ENCODE measurements at regions of chr18 and their contacts with region 1.

Region 1: DNA sequence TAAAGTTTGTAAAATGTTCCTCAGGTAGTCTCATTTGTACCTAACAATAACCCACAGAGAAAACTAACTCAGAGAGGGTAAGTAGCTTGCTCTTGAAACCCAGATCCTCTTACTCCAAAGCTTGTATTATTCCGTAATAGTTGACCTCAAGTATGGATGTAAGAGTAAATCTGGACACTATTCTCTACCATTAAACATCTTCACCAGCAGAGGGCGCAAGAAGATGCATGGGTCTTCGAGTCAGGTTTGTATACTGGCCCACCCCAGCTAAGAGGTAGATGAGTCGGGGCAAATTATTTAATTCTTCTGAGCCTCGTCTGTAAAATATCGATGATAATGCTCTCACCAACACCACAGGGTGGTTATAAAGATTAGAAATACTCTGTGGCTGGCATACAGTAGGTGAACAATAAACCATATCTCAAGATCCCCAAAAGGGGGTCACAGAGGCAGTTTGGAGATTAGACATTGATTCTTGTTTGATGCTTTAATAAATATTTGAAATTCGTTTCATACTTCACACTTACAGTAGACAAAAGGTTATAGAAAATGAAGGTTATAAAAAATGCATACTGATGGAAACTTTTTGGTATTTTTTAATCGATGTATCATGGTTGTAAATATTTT is 3.5 kb upstream of the CABLES1 start:
- DNase-seq: no peak

Region 2: GRCh38 chr18:23213200-23213599 is 81.4 kb after region 1 on chr18:
- intact Hi-C with region 1: loop called (anchors 5 kb)
- DNase-seq: no peak

Region 3: GRCh38 chr18:23228102-23229061 is 96.6 kb after region 1 on chr18:
- intact Hi-C with region 1: loop called (anchors 2 kb)
- DNase-seq: no peak

Region 4: GRCh38 chr18:23276451-23276850 is 144.6 kb after region 1 on chr18:
- intact Hi-C with region 1: loop called (anchors 5 kb)
- DNase-seq: no peak

Region 5: DNA sequence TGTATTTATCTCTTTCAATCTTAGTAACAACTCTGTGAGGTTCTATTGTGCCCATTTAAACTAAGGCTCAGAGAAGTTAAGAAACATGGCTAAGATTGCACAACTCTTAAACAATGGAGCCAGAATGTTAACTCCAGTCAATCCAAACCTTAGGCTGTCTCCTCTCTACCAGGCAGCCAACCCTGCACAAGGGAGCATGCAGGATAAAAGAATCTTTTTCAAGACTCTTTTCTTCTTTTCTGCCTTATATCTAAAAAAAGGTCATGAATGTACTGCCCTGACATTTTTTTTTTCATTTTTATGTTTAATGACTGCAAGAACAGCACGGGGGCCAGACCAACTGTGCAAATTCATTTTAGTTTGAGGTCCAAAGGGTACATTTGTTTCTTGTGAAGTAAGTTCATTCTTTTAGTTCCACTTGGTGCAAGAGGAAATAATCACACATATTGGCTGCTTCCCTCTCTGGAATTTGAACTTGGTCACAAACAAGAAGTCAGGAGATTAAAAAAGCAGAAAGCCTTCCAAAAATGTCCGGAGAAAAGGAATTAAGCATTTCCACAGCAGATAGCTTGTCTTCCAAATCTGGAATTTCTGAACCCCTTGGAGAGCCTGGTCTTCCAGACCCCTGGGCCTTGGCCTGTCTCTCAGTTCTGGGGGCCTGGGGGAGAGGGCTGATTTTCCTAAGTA is 225.3 kb after region 1 on chr18:
- intact Hi-C with region 1: loop called (anchors 2 kb)
- DNase-seq: no peak

Region 6: GRCh38 chr18:23377669-23378301 is 246.0 kb after region 1 on chr18:
- intact Hi-C with region 1: loop called (anchors 5 kb)
- DNase-seq: no peak

Region 7: DNA sequence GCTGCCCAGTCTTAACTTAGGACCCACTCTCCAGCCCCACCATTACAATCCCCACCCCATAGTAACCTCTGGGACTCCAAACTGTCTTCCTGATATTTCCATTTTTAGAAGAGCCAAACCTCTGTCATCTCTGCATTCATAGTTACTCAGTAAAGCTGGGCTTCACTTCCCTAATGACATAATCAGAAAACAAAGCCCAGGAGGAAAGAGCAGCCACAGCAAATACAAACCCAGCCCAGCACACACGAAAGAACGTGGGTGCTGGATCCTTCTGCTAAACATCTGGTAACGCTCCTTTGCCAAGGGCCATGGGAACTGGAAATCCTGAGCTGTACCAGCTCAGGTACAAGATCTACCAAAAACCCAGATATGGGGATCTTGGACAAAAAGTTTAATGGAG is 284.5 kb after region 1 on chr18:
- intact Hi-C with region 1: loop called (anchors 5 kb)
- DNase-seq: no peak